GM10248 (cell line): ENCODE measurements at regions of chr4 and their contacts with region 1.

Region 1: DNA sequence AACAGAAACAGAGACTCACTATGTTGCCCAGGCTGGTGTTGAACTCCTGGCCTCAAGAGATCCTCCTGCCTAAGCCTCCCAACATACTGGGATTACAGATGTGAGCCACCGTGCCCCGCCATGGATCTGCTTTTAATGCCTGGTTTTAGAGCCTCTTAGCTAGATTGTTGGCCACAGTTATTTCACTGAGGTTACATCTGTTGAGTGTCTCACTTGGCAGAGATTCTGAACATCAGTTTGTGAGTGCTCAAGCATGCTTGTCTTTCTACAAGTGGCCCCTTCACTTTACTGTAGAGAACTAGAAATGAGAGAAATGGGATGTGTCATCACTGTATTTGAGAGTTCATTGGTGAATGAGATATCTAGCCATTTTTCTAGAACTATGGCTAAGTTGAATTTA is 218.5 kb downstream of the APBB2 start:
- DNase-seq: no peak
- CTCF ChIP-seq: no peak

Region 2: GRCh38 chr4:40940317-40940741 is 55.5 kb before region 1 on chr4:
- CTCF ChIA-PET with region 1: no interaction called
- POLR2A ChIA-PET with region 1: no interaction called
- DNase-seq: no peak
- CTCF ChIP-seq: no peak

Region 3: GRCh38 chr4:40984051-40984450 is 11.8 kb before region 1 on chr4:
- CTCF ChIA-PET with region 1: interaction called, 13 read pairs
- POLR2A ChIA-PET with region 1: no interaction called
- DNase-seq: no peak
- CTCF ChIP-seq: no peak

Region 4: DNA sequence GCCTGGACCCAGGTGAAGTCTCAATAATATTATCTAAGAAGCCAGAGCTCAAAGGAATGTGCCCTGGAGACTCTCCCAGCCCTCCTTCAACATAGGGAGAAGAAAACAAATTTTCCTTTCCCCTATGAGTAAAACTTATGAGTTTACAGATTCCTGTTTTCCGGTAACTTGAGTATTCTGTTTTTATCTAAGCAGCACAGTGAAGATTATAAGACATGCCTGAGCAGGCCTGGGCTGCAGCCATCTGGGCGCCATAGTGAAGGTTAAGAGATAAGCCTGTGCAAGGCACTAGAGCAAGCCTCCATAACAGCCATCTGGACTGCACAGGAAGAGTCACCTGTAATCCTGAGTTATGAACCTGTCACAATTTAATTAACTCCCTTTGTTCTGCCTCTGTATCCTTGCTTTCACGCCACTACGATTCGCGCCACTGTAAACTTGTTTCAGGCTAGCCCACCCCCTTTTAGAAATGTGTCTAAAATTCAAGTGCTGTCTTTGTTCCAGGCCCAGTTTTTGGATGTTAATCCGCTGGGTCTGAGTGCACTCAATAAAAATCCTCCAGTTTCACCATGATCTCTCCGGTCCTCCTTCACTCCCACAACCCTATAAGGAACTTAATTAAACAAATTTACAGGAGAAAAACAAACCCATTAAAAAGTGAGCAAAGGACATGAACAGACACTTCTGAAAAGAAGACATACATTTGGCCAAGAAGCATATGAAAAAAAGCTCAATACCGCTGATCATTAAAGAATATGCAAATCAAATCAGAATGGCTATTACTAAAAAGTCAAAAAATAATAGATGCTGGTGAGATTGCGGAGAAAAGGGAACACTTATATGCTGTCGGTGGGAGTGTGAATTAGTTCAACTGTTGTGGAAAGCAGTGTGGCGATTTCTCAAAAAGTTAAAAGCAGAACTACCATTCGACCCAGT is 29.0 kb after region 1 on chr4:
- CTCF ChIA-PET with region 1: no interaction called
- POLR2A ChIA-PET with region 1: no interaction called
- DNase-seq: no peak
- CTCF ChIP-seq: no peak

Region 5: GRCh38 chr4:41853973-41854372 is 858.1 kb after region 1 on chr4:
- CTCF ChIA-PET with region 1: no interaction called
- POLR2A ChIA-PET with region 1: no interaction called
- DNase-seq: no peak
- CTCF ChIP-seq: no peak